ENCODE measurements at regions of chr12 and their contacts with region 1.

Region 1: GRCh38 chr12:109477185-109477962 is at the starts of genes KCTD10 and UBE3B:
- DNase-seq: peak; percentile 84
- H3K4me3 Mint-ChIP-seq: peak within 1 kb of the TSS; percentile 94
- H3K27ac Mint-ChIP-seq: peak within 1 kb of the TSS; percentile 98
- H3K4me1 Mint-ChIP-seq: peaks cover 40% of the 10 kb centered on the region
- H3K27me3 Mint-ChIP-seq: no peaks in the 10 kb centered on the region
- total RNA-seq, gene KCTD10: 48.3 and 51.2 TPM in 2 replicates
- total RNA-seq, gene UBE3B: 28.7 and 29.3 TPM in 2 replicates

Region 2: DNA sequence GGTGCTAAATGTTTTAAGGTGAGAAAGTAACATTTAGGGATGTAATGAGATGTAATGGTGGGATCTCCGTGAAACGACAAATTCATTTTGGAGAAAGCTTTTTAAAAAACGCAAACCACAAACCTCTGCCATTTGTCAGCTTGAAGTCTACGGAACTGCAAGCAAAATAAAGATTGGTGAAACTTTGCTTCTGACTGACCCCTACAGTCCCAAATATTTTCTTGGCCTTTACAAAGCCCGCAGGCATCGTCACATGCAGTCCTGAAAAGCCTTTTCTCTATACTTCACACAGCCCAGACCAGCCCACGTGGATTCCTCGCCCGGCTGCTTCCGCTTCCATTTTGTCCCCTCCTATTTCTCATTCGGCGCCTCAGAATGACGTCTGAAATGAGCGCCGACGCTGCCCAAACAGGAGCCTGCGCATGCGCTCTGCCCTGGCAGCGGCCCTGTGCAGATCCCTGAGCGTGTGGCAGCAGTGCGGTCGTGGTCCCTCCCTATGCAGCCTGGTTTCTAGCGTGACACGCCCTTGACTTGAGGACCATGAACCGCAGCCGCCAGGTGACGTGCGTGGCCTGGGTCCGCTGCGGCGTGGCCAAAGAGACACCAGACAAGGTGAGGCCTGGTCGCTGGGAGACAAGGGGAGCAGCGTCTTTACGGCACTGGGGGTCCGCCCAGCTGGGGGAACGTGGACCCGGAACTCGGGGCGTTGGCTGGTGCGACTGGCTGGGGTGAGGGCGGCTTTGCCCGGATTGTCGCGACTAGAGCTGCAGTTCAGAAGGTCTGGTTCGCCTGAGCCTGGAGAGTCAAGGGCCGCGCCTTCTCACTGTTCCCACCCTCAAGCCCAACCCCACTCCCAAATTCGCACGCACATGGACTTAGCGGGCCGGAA is 1791.8 kb before region 1 on chr12 and contains the start of gene PWP1:
- intact Hi-C with region 1: loop called (anchors 5 kb)
- DNase-seq: peak; percentile 95
- H3K4me3 Mint-ChIP-seq: peak within 1 kb of the TSS; percentile 96
- H3K27ac Mint-ChIP-seq: peak within 1 kb of the TSS; percentile 97
- H3K4me1 Mint-ChIP-seq: peaks cover 36% of the 10 kb centered on the region
- H3K27me3 Mint-ChIP-seq: no peaks in the 10 kb centered on the region
- total RNA-seq, gene PWP1: 54.4 and 57.1 TPM in 2 replicates

Region 3: GRCh38 chr12:109154451-109155438 is 322.6 kb before region 1 on chr12:
- intact Hi-C with region 1: loop called (anchors 1 kb)
- DNase-seq: peak; percentile 71
- H3K4me3 Mint-ChIP-seq: peak overlapping the region; percentile 85
- H3K27ac Mint-ChIP-seq: peak overlapping the region; percentile 63
- H3K4me1 Mint-ChIP-seq: peaks cover 17% of the 10 kb centered on the region
- H3K27me3 Mint-ChIP-seq: peaks cover 15% of the 10 kb centered on the region

Region 4: GRCh38 chr12:109377139-109377685 is 100.2 kb before region 1 on chr12:
- intact Hi-C with region 1: no loop called
- DNase-seq: no peak
- H3K4me3 Mint-ChIP-seq: no peak overlapping the region
- H3K27ac Mint-ChIP-seq: no peak overlapping the region
- H3K4me1 Mint-ChIP-seq: no peaks in the 10 kb centered on the region
- H3K27me3 Mint-ChIP-seq: peaks cover 28% of the 10 kb centered on the region

Region 5: GRCh38 chr12:109504068-109504467 is 26.7 kb after region 1 on chr12:
- intact Hi-C with region 1: no loop called
- DNase-seq: no peak
- H3K4me3 Mint-ChIP-seq: no peak overlapping the region
- H3K27ac Mint-ChIP-seq: no peak overlapping the region
- H3K4me1 Mint-ChIP-seq: peaks cover 5% of the 10 kb centered on the region
- H3K27me3 Mint-ChIP-seq: no peaks in the 10 kb centered on the region

Region 6: GRCh38 chr12:109573029-109573913 is 95.9 kb after region 1 on chr12 and contains the starts of genes MMAB and MVK:
- intact Hi-C with region 1: loop called (anchors 1 kb)
- DNase-seq: peak; percentile 99
- H3K4me3 Mint-ChIP-seq: peak within 1 kb of the TSS; percentile 91
- H3K27ac Mint-ChIP-seq: peak within 1 kb of the TSS; percentile 88
- H3K4me1 Mint-ChIP-seq: peaks cover 30% of the 10 kb centered on the region
- H3K27me3 Mint-ChIP-seq: no peaks in the 10 kb centered on the region
- total RNA-seq, gene MMAB: 41.9 and 42.2 TPM in 2 replicates
- total RNA-seq, gene MVK: 14.2 and 15.8 TPM in 2 replicates

Region 7: GRCh38 chr12:109880016-109880931 is 402.9 kb after region 1 on chr12 and contains the start of gene GLTP:
- intact Hi-C with region 1: loop called (anchors 1 kb)
- DNase-seq: peak; percentile 91
- H3K4me3 Mint-ChIP-seq: peak within 1 kb of the TSS; percentile 95
- H3K27ac Mint-ChIP-seq: peak within 1 kb of the TSS; percentile 87
- H3K4me1 Mint-ChIP-seq: peaks cover 29% of the 10 kb centered on the region
- H3K27me3 Mint-ChIP-seq: peaks cover 10% of the 10 kb centered on the region
- total RNA-seq, gene GLTP: 27.7 and 29.1 TPM in 2 replicates

Region 8: DNA sequence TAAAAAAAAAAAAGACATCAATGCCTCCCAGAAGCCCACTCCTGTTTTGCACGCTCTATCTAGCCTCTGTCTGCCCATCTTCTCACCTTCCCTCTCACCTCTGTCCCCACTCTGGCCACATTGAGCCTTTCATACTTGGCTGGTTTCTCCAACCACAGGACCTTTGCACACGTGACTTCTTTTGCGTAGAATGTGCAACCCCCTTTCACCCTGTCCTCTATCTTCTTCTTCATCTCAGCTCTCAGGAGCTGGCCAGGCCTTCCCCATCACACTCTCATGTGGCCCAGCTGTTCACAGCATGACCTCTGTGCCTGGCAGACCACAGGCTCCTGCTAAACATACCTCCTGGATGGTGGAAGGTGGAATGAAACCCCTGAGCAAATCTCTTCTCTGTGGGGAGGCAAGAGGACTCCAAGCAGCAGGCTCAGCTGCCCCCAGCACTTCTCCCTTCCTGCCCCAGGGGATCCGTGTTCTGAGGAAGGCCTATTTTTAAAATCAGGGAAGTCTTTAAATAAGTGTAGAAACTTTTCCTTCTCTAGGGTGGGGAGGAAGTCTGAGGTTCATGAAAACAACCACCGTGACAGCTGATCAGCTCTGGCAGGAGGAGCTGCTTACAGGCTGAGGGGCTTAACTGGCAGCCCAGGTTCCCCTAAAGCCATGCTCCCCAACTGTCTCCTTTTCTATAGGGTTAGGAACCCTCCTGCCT is 1200.0 kb after region 1 on chr12:
- intact Hi-C with region 1: no loop called
- DNase-seq: no peak
- H3K4me3 Mint-ChIP-seq: no peak overlapping the region
- H3K27ac Mint-ChIP-seq: no peak overlapping the region
- H3K4me1 Mint-ChIP-seq: peaks cover 47% of the 10 kb centered on the region
- H3K27me3 Mint-ChIP-seq: no peaks in the 10 kb centered on the region

Measured in activated T-helper 1 cell treated with anti-CD3 and anti-CD28 coated beads, Interleukin-12 subunit alpha, Interleukin-12 subunit beta, Interleukin-2, Interleukin-4 antibody, amounts not matched to agents 30 ng/mL and 10 ng/mL and 1 ng/mL, durations not matched to agents 14 hours and 24 hours and 36 hours (primary cell).